Posterior vena cava (tissue), 2 donors: ENCODE measurements at regions of chr1 and their contacts with region 1.

Region 1: DNA sequence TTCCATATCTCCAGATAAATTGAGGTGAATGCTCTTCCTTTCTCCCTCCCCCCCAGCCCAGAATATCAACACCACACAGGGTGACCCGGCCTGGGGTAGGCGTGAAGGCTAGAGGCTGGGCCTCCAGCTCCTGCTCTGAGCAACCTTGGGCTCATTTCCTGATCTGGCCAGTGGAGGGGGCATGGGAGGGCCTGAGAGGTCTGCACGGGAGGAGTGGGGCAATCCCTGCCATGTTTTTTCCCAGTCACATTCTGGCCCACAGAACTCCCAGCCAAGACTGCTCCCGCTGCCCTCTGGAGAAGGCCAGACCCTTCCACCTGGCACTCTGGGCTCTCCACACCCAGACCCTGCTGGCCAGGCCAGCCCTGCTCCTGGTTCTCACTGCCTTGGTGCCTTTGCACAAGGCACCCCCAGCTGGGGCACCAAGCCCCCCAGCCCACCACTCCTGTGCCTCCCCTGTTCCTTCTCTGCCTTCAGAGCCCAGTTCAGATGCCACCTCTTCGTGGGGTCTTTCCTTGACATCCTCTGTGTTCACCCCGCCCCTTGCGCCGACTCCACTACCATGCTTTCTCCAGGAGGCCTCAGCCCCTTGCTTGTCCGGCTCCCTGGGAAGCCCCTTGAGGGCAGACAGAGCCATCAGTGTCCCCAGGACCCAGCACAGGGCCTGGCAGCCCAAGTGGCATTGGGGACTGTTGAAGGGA is 3.7 kb downstream of the CLDN19 start:
- DNase-seq: peak; percentile 65

Region 2: GRCh38 chr1:41174170-41174569 is 1562.1 kb before region 1 on chr1:
- intact Hi-C with region 1: loop called in 1 of 2 experiments (anchors 5 kb)
- DNase-seq: no peak

Region 3: DNA sequence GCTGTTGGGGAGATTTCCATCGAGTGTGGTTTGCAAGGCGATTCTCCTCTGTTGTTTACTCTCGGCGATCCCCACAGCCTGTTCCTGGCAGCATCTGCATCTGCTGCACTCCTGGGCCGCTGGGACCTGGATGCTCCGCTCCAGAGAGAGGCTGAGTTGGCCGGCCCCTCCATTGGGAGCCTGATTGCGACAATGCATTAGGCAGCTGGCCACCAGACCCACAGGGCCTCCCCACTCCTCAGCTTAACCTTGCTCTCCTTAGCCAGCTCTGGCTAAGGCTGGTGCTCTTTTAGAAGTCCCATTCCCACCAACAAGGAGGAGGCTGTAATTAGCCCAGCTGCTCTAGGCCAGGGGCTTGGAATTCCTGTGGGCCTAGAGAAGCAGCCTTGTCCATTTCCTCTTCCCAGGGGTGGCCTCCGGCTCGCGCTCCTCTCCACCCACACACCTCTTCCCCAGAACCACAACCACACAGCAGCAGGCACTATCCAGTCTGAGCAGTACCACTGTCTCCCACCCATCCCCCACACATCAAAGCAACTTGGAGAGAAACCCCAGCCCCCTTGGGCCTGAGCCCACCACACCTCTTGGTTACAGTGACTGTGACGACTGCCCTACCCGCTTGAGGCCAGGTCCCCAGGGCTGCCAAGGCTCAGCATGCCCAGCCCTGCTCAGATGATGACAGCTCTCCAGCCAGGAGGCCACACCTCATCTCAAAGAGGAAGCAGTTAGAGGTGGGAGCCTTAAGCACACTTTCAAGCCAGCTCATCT is 1058.0 kb before region 1 on chr1:
- intact Hi-C with region 1: loop called in 1 of 2 experiments (anchors 10 kb)
- DNase-seq: no peak

Region 4: DNA sequence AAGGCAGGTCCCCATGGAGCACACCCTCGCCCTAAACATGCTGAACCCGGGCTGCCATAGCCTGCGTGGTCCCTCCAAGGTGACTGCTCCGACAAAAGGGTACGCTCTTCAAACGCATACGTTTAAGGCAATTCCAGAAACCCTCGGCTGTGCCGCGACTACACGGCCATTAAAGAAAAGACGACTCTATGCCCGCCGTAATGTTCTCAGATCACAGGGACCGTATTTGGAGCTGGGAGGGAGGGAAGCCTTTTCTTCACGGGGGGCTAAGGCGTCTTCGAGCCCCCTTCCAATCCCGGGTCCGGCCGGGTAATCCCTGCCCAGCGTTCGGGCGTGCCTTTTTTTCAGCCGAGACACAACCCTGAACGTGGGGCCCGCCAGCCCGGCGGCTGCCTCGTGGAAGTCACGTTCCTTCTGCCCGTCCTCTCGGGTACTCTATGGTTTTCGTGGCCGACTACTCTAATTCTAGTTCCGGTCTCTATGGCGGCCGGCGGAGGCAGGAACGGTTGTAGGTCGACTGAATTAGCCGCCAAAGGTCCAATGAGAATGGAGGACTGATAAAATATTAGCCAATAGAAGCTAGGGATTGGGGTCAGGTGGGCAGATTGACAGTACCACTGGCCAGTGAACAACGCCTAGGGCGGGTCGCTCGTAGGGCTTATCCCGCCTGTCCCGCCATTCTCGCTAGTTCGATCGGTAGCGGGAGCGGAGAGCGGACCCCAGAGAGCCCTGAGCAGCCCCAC is 54.4 kb before region 1 on chr1 and contains the start of gene YBX1:
- intact Hi-C with region 1: no loop called
- DNase-seq: peak; percentile 98
- total RNA-seq, gene YBX1: 596 to 706 TPM